BJ (cell line): ENCODE measurements at regions of chr1 and their contacts with region 1.

Region 1: DNA sequence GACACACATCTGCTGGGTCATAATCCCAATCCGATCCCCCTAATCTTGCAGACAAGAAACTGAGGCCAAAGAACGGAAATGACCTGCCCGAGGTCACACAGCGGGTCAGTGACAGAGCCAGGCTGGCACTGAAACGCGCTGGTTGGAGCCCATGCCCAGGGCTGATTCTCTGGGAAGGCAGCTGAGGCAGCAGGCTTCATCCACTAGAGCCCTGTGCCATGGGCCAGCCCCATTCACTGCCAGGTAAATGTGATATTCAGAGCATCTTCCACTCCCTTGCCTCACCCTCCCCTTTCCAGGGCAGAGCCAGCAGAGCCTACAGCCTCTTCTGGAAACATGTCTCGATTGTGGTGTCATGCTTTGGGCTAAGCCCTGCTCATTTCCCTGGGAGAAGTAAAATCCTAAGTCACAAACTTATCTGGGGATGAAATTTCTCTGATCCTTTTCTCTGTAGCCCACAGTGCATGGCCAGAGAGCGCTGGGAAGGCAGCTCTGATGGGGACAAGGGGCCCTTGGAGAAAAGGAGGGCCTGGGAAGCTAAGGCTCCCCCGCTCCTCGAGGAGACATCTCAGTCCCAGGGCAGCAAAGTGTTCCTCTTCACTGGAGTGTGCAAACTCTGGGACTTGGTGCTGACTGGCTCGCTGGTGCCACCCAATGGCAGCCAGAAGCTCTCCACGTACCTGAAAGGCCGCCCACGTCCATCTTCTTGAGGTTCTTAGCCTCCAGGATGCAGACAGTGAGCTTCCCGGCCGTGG is 110.4 kb downstream of the SYT2 start:
- DNase-seq: no peak
- H3K4me3 ChIP-seq: no peak overlapping the region
- H3K27me3 ChIP-seq: no peaks in the 10 kb centered on the region
- CTCF ChIP-seq: peak; percentile 93

Region 2: GRCh38 chr1:202462342-202463076 is 137.3 kb before region 1 on chr1:
- CTCF ChIA-PET with region 1: interaction called, 12 read pairs
- POLR2A ChIA-PET with region 1: no interaction called
- DNase-seq: no peak
- H3K4me3 ChIP-seq: no peak overlapping the region
- H3K27me3 ChIP-seq: no peaks in the 10 kb centered on the region
- CTCF ChIP-seq: no peak

Region 3: DNA sequence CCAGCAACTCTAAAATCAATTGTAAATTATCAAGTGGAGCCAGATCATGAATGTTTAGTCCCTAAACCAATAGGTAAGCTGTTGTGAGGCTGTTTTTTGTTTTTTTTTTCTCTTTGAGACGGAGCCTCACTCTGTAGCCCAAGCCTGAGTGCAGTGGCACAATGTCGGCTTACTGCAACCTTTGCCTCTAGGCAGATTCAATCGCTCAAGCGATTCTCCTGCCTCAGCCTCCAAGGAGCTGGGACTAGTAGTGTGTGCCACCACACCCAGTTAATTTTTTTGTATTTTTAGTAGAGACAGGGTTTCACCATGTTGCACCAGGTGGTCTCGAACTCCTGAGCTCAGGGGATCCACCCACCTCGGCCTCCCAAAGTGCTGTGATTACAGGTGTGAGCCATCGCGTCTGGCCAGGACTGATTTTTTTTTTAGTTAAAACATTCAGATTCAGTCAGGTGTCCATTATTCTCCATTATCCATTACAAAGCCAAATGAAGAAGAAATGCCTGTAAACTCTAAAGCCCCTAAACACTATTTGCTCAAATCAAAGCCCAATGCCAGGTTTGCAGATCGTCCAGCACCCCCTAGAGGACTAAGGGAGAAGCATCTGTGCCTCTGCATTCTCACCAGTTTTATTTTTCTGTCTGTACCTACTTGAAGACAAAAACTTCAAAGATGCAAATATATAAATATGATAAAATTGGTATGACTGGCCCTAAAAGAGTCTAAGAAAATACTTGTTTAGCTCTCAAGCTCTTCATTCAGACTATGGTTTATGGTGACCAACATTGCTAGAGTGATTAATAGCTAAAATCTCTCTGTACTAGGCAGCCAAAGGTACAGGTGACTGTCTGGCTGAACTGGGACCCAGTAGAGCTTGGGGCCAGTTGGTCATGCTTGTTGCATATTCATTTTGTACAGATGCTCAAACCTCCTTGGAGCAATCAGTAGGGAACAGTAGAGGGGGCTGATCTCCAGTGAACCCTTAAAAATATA is 28.2 kb before region 1 on chr1:
- CTCF ChIA-PET with region 1: interaction called, 30 read pairs
- POLR2A ChIA-PET with region 1: no interaction called
- DNase-seq: no peak
- H3K4me3 ChIP-seq: no peak overlapping the region
- H3K27me3 ChIP-seq: no peaks in the 10 kb centered on the region
- CTCF ChIP-seq: peak; percentile 79

Region 4: GRCh38 chr1:202589190-202590030 is 10.4 kb before region 1 on chr1:
- CTCF ChIA-PET with region 1: interaction called, 15 read pairs
- POLR2A ChIA-PET with region 1: no interaction called
- DNase-seq: peak; percentile 99
- H3K4me3 ChIP-seq: no peak overlapping the region
- H3K27me3 ChIP-seq: no peaks in the 10 kb centered on the region
- CTCF ChIP-seq: peak; percentile 22; the same call in 1 of the 2 replicates

Region 5: DNA sequence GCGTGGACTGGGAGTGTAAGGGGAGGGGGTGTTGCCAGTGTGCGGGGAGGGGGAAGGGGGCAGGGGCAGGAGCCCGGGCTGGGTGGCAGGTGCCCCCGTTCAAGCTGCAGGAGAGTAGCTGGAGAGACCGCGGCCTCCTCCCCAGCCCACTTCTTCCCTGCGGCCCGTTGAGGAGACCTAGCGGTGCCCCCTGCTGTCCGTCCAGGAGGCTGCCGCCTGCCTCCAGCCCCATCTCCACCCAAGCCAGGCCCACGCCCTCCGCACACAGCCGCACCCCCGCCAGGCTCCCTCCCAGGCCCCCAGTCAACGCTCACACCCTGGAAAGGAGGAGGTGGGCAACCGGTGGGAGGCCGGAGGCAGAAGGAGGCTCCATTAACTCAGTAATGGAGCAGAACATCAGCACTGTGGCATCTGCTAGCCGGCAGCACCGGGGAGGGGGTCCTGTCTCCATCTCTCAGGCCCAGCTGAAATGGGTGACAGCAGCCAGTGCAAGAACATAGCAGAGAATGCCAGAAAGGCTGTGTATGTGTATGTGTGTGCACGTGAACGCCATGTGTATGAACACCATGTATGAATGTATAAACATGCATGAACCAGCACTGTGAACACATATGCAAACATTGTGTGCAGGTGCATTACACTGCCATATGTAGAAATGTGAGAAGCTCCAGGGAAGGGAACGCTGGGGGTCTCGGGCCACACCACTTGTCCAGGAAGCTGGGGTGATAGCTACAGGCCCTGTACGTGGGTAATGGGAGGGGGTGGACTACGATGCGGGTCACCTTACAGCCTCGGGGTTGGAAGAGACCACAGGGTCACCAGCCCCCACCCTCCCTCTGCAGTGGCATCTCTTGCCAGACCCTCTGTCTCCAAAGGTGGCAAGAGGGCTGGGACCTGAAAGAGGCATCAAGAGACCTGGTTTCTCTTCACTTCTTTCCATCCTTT is 25.8 kb after region 1 on chr1:
- CTCF ChIA-PET with region 1: interaction called, 11 read pairs
- POLR2A ChIA-PET with region 1: no interaction called
- DNase-seq: no peak
- H3K4me3 ChIP-seq: no peak overlapping the region
- H3K27me3 ChIP-seq: no peaks in the 10 kb centered on the region; the same call in none of the 2 replicates
- CTCF ChIP-seq: peak; percentile 81

Region 6: DNA sequence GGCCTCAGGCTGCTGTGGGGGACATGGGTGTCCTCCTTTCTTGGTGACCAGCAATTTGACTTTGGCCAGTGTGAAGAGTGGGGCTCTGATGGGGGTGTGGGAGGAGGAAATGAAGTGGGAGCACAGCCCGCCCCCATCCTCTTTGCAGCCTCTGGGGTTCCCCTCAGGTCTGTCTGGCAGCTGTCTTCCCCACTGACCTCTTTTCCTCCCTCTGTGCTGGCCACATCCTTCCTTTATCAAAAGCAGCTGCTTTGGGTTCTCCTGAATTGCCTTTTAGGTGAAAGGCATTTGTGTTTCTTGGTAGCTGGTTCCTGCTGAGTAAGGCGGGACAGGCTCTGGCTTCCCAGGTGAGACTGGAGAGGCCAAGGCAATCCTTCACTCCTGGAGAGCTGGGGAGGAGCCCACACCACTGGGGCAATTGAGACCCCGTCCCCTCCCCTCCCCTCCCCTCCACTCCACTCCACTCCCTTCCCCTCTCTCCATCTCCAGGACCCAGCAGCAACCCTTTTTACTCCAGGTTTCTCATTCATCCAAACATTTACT is 235.8 kb after region 1 on chr1:
- CTCF ChIA-PET with region 1: no interaction called
- POLR2A ChIA-PET with region 1: no interaction called
- DNase-seq: no peak
- H3K4me3 ChIP-seq: no peak overlapping the region
- H3K27me3 ChIP-seq: peaks cover 9% of the 10 kb centered on the region
- CTCF ChIP-seq: no peak